ENCODE measurements at regions of chr13 and their contacts with region 1.

Region 1: DNA sequence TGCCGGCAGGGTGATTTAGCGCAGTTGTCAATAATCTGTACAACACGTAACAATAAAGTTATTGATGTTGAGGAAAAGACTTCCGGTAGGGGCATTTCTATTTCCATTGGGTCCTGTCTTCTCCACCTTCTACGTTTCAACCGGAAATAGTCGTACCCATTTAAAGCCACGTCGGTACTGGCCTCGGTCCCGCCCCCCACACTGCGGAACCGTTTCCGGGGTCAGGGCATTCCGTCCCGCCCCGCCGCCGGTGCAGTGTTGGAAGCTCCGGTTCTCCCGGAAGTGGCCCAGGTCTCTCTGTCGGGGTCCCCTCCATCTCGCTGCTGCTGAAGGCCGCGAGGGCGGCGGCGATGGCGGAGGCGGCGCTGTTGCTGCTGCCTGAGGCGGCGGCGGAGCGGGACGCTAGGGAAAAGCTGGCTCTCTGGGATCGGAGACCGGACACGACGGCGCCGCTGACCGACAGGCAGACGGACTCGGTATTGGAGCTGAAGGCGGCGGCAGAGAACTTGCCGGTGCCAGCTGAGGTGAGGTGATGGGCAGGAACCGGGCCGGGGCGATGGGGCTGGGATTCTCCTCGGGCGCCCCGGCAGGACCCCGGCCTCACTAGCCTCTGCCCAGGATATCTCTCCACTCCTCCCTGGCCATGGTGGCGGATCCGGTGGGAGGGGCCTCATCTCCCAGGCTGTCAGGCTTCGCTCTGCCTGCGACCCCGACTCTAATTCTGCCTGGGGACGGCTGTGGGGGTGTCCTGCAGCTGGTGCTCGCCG is at the start of gene COG3:
- DNase-seq: peak; percentile 98
- total RNA-seq, gene COG3: 19.0 and 29.1 TPM in 2 replicates

Region 2: DNA sequence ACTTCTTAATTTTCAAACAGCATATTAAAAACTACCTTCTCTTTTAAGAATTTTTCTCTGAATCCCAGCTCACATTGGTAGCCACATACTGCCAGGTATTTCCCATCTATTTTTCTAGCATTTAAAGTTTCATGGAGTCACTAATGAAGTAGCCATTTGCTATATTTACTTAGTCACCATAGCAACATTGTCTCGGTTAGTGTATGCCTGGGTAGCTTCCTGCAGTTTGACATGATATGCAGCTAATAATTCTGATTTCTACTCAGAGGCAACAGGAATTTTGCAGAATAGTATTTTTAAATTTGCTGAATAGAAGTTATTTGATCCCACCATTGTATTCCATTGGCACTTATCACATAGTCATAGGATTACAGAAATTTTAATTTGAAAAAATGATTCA is 233.1 kb before region 1 on chr13:
- in situ Hi-C with region 1: no loop called
- DNase-seq: no peak

Region 3: GRCh38 chr13:45396533-45397095 is 68.3 kb before region 1 on chr13:
- in situ Hi-C with region 1: loop called (anchors 5 kb)
- DNase-seq: no peak

Measured in G401 (cell line).